HepG2 (cell line): ENCODE measurements at regions of chr9 and their contacts with region 1.

Region 1: GRCh38 chr9:34603610-34604231 is 8.2 kb downstream of the RPP25L start:
- DNase-seq: peak; percentile 62
- ATAC-seq: peak; percentile 91
- H3K4me3 ChIP-seq: no peak overlapping the region
- H3K27ac ChIP-seq: no peak overlapping the region
- H3K4me1 ChIP-seq: peaks cover 11% of the 10 kb centered on the region
- H3K27me3 ChIP-seq: no peaks in the 10 kb centered on the region
- CTCF ChIP-seq: peak; percentile 94
- EP300 ChIP-seq: no peak
- POLR2A ChIP-seq: no peak
- RAD21 ChIP-seq: peak; percentile 72

Region 2: DNA sequence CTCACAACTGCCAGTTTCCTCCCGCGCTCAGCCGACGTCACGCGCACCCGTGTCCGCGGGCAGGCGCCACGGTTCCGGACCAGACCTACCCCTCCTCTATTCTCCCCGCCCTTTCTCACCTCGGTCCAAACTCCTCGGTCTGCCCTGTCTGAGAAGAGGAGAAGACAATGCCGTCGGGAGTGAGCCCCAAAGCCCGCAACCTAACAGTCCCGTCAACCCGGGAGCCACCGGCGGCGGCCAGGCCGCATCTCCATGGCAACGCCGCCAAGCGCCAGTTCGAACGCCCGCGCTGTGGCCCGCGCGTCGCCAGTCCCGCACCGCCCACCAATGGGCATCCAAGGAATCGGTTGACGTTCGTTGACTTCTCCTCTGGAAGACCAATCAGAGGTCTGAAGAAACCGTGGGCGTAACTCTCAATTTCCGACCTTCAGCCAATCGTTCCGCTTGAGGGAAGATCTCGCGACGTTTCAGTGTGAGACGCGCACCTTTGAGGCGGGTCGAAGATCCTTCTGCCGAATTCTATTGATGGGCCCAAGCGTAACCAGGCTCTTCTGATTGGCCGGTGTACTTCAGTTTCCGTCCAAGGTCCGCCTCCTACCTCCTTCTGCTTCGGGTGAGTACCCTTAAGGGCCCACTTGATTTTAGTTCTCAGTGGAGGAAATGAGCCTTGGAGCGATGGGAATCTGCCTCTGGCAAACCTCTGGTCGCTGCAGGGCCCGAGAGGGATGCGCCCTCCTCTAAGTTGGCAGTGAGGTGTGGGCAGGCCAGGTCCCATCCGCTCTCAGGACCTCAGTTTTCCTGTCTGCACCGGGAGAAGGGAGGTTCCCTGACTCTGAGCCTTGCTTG is 274.5 kb before region 1 on chr9 and contains the starts of genes KIF24 and NUDT2:
- CTCF ChIA-PET with region 1: no interaction called
- POLR2A ChIA-PET with region 1: no interaction called
- in situ Hi-C with region 1: no loop called
- intact Hi-C with region 1: loop called (anchors 5 kb)
- DNase-seq: peak; percentile 100
- ATAC-seq: peak; percentile 96
- H3K4me3 ChIP-seq: peak within 1 kb of the TSS; percentile 83 to 94 (median 89)
- H3K27ac ChIP-seq: peak within 1 kb of the TSS; percentile 89
- H3K4me1 ChIP-seq: peaks cover 50% of the 10 kb centered on the region
- H3K27me3 ChIP-seq: no peaks in the 10 kb centered on the region; a peak in 1 of 5 replicates
- CTCF ChIP-seq: 0 out of 2 replicates have a peak, but pooled peaks have one; percentile 11
- EP300 ChIP-seq: no peak
- POLR2A ChIP-seq: peak; percentile 88 to 94
- RAD21 ChIP-seq: no peak
- total RNA-seq, gene KIF24: 2.8 and 3.0 TPM in 2 replicates
- total RNA-seq, gene NUDT2: 19.9 and 28.0 TPM in 2 replicates

Region 3: GRCh38 chr9:34443533-34443932 is 160.2 kb before region 1 on chr9:
- CTCF ChIA-PET with region 1: no interaction called
- POLR2A ChIA-PET with region 1: no interaction called
- in situ Hi-C with region 1: loop called (anchors 5 kb)
- intact Hi-C with region 1: no loop called
- DNase-seq: no peak
- ATAC-seq: no peak
- H3K4me3 ChIP-seq: no peak overlapping the region
- H3K27ac ChIP-seq: no peak overlapping the region
- H3K4me1 ChIP-seq: peaks cover 10% of the 10 kb centered on the region; the same call in 1 of the 2 replicates
- H3K27me3 ChIP-seq: no peaks in the 10 kb centered on the region
- CTCF ChIP-seq: no peak
- EP300 ChIP-seq: no peak
- POLR2A ChIP-seq: no peak
- RAD21 ChIP-seq: no peak

Region 4: DNA sequence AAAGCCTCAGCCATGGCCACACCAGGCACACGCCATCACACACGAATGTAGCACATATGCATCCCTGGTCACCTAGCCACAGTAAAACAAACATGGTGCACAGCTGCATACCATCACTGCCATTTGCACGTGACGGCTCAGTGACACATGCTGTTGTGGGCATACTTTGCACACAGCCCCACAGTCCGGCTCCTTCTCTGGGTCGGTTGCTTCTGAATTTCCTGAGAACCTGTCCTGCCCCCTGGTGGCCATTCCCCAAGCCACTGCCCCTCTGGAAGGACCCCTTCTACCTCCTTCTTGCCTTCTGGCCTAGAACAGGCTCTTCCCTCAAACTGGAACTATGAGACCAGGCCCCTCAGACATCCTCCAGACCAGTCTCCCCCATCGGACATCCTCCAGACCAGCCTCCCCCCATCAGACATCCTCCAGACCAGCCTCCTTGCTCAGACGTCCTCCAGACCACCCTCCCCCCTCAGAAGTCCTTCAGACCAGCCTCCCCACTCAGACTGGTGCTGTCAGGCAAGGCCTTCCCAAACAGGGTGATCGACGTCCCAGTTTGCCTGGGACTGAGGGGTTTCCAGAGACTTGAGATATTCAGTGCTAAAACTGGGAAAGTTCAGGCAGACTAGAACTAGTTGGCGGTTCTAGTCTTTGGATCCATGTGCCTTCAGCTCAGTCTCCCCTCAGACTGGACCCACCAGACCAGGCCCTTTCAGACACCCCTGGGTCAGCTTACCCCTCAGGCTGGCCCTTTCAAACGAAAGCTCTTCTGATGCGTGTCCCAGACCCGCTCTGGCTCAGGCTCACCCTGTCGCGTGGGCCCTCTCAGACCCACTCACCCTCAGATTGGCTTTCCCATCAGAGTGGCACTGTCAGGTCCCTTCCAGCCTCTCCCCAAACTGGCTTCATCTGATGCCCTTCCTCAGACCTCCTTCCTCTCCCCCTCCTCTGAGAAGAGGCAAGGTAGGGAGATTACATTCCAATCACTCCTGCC is 56.6 kb before region 1 on chr9:
- CTCF ChIA-PET with region 1: interaction called, 18 read pairs
- POLR2A ChIA-PET with region 1: no interaction called
- in situ Hi-C with region 1: no loop called
- intact Hi-C with region 1: loop called (anchors 1 kb)
- DNase-seq: peak; percentile 58
- ATAC-seq: peak; percentile 76
- H3K4me3 ChIP-seq: no peak overlapping the region
- H3K27ac ChIP-seq: no peak overlapping the region
- H3K4me1 ChIP-seq: peaks cover 18% of the 10 kb centered on the region
- H3K27me3 ChIP-seq: peaks cover 0 to 17% of the 10 kb centered on the region in 2 experiments; a peak in 2 of 5 replicates
- CTCF ChIP-seq: peak; percentile 78
- EP300 ChIP-seq: no peak
- POLR2A ChIP-seq: no peak
- RAD21 ChIP-seq: peak; percentile 73

Region 5: GRCh38 chr9:34620061-34620994 is 16.6 kb after region 1 on chr9 and contains the start of gene DCTN3:
- CTCF ChIA-PET with region 1: no interaction called
- POLR2A ChIA-PET with region 1: no interaction called
- in situ Hi-C with region 1: no loop called
- intact Hi-C with region 1: no loop called
- DNase-seq: peak; percentile 91
- ATAC-seq: peak; percentile 98
- H3K4me3 ChIP-seq: peak within 1 kb of the TSS; percentile 89 to 93 (median 89)
- H3K27ac ChIP-seq: no peak within 1 kb of the TSS
- H3K4me1 ChIP-seq: peaks cover 17% of the 10 kb centered on the region
- H3K27me3 ChIP-seq: peaks cover 0 to 2% of the 10 kb centered on the region in 2 experiments; a peak in 2 of 5 replicates
- CTCF ChIP-seq: no peak
- EP300 ChIP-seq: no peak
- POLR2A ChIP-seq: peak; percentile 49 to 57
- RAD21 ChIP-seq: no peak
- total RNA-seq, gene DCTN3: 27.4 and 30.8 TPM in 2 replicates